ENCODE measurements at regions of chr3 and their contacts with region 1.

Region 1: DNA sequence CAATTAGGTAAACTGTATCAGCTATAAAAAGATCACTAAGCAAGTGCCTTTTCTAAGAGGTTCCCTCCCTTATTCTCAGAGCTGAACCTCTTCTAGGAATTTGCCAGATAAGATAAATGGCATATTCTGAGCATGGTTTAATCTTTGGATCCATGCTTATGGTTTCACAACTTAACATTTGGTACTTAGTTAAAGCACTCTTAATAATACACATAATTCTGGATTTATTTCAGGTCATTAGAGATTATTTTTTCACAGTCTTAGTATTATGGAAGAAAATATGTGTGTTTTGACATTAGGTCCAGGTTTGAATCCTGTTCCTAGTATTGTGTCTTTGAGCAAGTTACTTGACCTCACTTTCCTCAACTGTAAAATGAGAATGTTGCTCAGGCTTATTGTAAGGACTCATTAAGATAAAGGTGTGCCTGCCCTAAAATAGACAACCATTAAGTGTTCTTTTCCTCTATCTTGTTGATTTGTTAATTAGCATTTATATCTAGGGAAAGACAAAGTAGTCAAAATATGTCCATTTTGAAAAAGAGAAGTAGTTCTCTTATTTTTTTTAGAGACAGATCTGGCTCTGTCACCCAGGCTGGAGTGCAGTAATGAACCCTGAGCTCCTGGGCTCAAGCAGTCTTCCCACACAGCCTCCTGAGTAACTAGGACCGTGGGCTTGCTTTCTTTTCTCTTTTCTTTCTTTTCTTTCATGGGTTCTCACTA is 43.4 kb downstream of the TSC22D2 start:
- DNase-seq: peak; percentile 33 to 83 (median 50)
- ATAC-seq: peak; percentile 72
- H3K4me3 ChIP-seq: peak overlapping the region; percentile 5; the same call in 1 of the 2 replicates
- H3K27ac ChIP-seq: peak overlapping the region; percentile 85
- H3K4me1 ChIP-seq: peaks cover 26 to 53% of the 10 kb centered on the region in 2 experiments
- H3K27me3 ChIP-seq: no peaks in the 10 kb centered on the region
- CTCF ChIP-seq: no peak
- EP300 ChIP-seq: peak; percentile 97
- POLR2A ChIP-seq: no peak
- RAD21 ChIP-seq: peak in 1 of 2 experiments; percentile 14; a peak in 1 of 4 replicates

Region 2: DNA sequence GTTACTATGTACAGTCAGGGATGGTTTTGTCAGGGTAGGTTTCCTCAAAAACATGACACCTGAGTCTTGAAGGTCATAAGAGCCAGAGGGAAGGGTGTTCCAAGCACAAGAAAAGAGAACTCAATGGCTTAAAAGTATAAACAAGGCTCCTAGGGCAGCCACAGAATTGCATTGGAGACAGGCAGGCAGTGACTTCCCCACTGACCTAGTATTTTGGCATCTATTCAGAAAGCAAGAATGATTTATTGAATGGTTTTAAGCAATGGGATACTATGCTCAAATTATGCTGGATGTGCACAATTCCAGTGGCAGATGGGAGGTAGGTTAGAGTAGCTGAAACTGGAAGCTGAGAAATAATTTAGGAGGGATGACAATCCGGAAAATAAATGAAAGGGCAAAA is 10.6 kb after region 1 on chr3:
- CTCF ChIA-PET with region 1: no interaction called
- POLR2A ChIA-PET with region 1: interaction called, 12 read pairs
- in situ Hi-C with region 1: no loop called
- intact Hi-C with region 1: no loop called
- DNase-seq: peak in 2 of 4 experiments; percentile 15 to 33
- ATAC-seq: peak; percentile 55
- H3K4me3 ChIP-seq: no peak overlapping the region
- H3K27ac ChIP-seq: peak overlapping the region; percentile 33; the same call in 2 of the 3 replicates
- H3K4me1 ChIP-seq: peaks cover 5 to 6% of the 10 kb centered on the region in 2 experiments; a peak in 3 of 5 replicates
- H3K27me3 ChIP-seq: no peaks in the 10 kb centered on the region
- CTCF ChIP-seq: no peak
- EP300 ChIP-seq: no peak
- POLR2A ChIP-seq: 0 out of 2 replicates have a peak, but pooled peaks have one; percentile 34
- RAD21 ChIP-seq: no peak